K562 (cell line): ENCODE measurements at regions of chr3 and their contacts with region 1.

Region 1: GRCh38 chr3:128590948-128591347 is 59.7 kb downstream of the RPN1 start:
- DNase-seq: peak in 3 of 4 experiments; percentile 31 to 54 (median 53)
- ATAC-seq: peak; percentile 96
- H3K4me3 ChIP-seq: no peak overlapping the region
- H3K27ac ChIP-seq: no peak overlapping the region
- H3K4me1 ChIP-seq: peaks cover 3 to 9% of the 10 kb centered on the region in 2 experiments; a peak in 4 of 5 replicates
- H3K27me3 ChIP-seq: no peaks in the 10 kb centered on the region
- CTCF ChIP-seq: peak; percentile 58 to 69 (median 60)
- EP300 ChIP-seq: no peak
- POLR2A ChIP-seq: no peak
- RAD21 ChIP-seq: peak in 1 of 2 experiments; percentile 62; a peak in 3 of 4 replicates

Region 2: GRCh38 chr3:128794770-128795649 is 204.1 kb after region 1 on chr3:
- CTCF ChIA-PET with region 1: interaction called, 3 read pairs
- POLR2A ChIA-PET with region 1: no interaction called
- in situ Hi-C with region 1: no loop called
- intact Hi-C with region 1: loop called (anchors 5 kb)
- DNase-seq: peak; percentile 61 to 69 (median 64)
- ATAC-seq: peak; percentile 99
- H3K4me3 ChIP-seq: no peak overlapping the region
- H3K27ac ChIP-seq: peak overlapping the region; percentile 51; the same call in 1 of the 3 replicates
- H3K4me1 ChIP-seq: peaks cover 0 to 17% of the 10 kb centered on the region in 2 experiments; a peak in 3 of 5 replicates
- H3K27me3 ChIP-seq: no peaks in the 10 kb centered on the region
- CTCF ChIP-seq: peak; percentile 62 to 78 (median 72)
- EP300 ChIP-seq: no peak
- POLR2A ChIP-seq: no peak
- RAD21 ChIP-seq: peak; percentile 49 to 71